HCT116 (cell line): ENCODE measurements at regions of chr21 and their contacts with region 1.

Region 1: GRCh38 chr21:45140346-45140940 is 66.1 kb downstream of the ADARB1 start:
- DNase-seq: peak; percentile 79
- ATAC-seq: peak; percentile 96
- H3K4me3 ChIP-seq: no peak overlapping the region
- H3K27ac ChIP-seq: no peak overlapping the region
- H3K4me1 ChIP-seq: peaks cover 10 to 24% of the 10 kb centered on the region in 2 experiments; a peak in 3 of 4 replicates
- H3K27me3 ChIP-seq: no peaks in the 10 kb centered on the region
- CTCF ChIP-seq: peak; percentile 86 to 93 (median 88)
- POLR2A ChIP-seq: no peak
- RAD21 ChIP-seq: peak; percentile 89

Region 2: DNA sequence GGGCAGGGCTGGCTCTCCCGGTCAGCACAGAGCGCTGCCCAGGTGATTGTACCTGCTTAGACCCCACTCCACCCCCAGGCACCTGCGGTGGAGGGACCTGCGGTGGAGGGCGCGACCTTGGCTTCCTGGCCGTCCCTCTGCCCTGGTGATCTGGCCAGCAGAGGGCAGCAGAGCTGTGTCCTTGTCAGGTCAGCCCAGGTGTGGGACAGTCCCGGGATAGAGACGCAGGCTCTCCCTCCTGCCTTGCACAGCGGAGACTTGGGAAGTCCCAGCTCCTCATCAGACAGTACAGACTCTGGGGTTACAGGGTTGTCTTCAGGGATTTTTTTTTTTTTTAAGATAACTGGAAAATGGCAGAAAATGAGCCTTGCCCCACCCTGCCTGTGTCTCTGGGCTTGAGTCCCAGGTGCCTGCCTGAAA is 190.7 kb before region 1 on chr21:
- CTCF ChIA-PET with region 1: interaction called, 54 read pairs
- POLR2A ChIA-PET with region 1: no interaction called
- RAD21 ChIA-PET with region 1: no interaction called
- intact Hi-C with region 1: no loop called
- DNase-seq: peak; percentile 42
- ATAC-seq: peak; percentile 93
- H3K4me3 ChIP-seq: no peak overlapping the region
- H3K27ac ChIP-seq: no peak overlapping the region
- H3K4me1 ChIP-seq: no peaks in the 10 kb centered on the region; a peak in 1 of 4 replicates
- H3K27me3 ChIP-seq: no peaks in the 10 kb centered on the region
- CTCF ChIP-seq: peak; percentile 86 to 90 (median 89)
- POLR2A ChIP-seq: no peak
- RAD21 ChIP-seq: peak; percentile 86

Region 3: GRCh38 chr21:45130324-45130774 is 10.1 kb before region 1 on chr21:
- CTCF ChIA-PET with region 1: interaction called, 120 read pairs
- POLR2A ChIA-PET with region 1: interaction called, 3 read pairs
- RAD21 ChIA-PET with region 1: no interaction called
- intact Hi-C with region 1: no loop called
- DNase-seq: no peak
- ATAC-seq: no peak
- H3K4me3 ChIP-seq: 0 out of 4 replicates have a peak overlapping the region, but pooled peaks of 1 of the 2 experiments have one; percentile 4
- H3K27ac ChIP-seq: no peak overlapping the region
- H3K4me1 ChIP-seq: peaks cover 15 to 19% of the 10 kb centered on the region in 2 experiments
- H3K27me3 ChIP-seq: no peaks in the 10 kb centered on the region
- CTCF ChIP-seq: no peak
- POLR2A ChIP-seq: no peak
- RAD21 ChIP-seq: no peak

Region 4: GRCh38 chr21:45287438-45288391 is 147.3 kb after region 1 on chr21 and contains the start of gene POFUT2:
- CTCF ChIA-PET with region 1: interaction called, 50 read pairs
- POLR2A ChIA-PET with region 1: interaction called, 5 read pairs
- RAD21 ChIA-PET with region 1: interaction called, 5 to 6 read pairs
- intact Hi-C with region 1: loop called (anchors 1 kb)
- DNase-seq: peak; percentile 85
- ATAC-seq: peak; percentile 81
- H3K4me3 ChIP-seq: peak within 1 kb of the TSS; percentile 68 to 80
- H3K27ac ChIP-seq: peak within 1 kb of the TSS; percentile 56; the same call in 1 of the 2 replicates
- H3K4me1 ChIP-seq: peaks cover 11 to 17% of the 10 kb centered on the region in 2 experiments
- H3K27me3 ChIP-seq: no peaks in the 10 kb centered on the region
- CTCF ChIP-seq: no peak
- POLR2A ChIP-seq: peak; percentile 59
- RAD21 ChIP-seq: no peak
- total RNA-seq, gene POFUT2: 20.5 TPM

Region 5: GRCh38 chr21:45439161-45439872 is 298.9 kb after region 1 on chr21:
- CTCF ChIA-PET with region 1: interaction called, 7 read pairs
- POLR2A ChIA-PET with region 1: no interaction called
- RAD21 ChIA-PET with region 1: no interaction called
- intact Hi-C with region 1: loop called (anchors 1 kb)
- DNase-seq: peak; percentile 50
- ATAC-seq: peak; percentile 95
- H3K4me3 ChIP-seq: no peak overlapping the region
- H3K27ac ChIP-seq: peak overlapping the region; percentile 2; the same call in 1 of the 2 replicates
- H3K4me1 ChIP-seq: peaks cover 0 to 9% of the 10 kb centered on the region in 2 experiments; a peak in 1 of 4 replicates
- H3K27me3 ChIP-seq: no peaks in the 10 kb centered on the region
- CTCF ChIP-seq: peak; percentile 79 to 90 (median 82)
- POLR2A ChIP-seq: no peak
- RAD21 ChIP-seq: peak; percentile 97